HCT116 (cell line): ENCODE measurements at regions of chr19 and their contacts with region 1.

Region 1: GRCh38 chr19:42794765-42795164 is 29.3 kb upstream of the PSG8 start:
- DNase-seq: no peak
- ATAC-seq: no peak
- H3K4me3 ChIP-seq: no peak overlapping the region
- H3K27ac ChIP-seq: no peak overlapping the region
- H3K4me1 ChIP-seq: no peaks in the 10 kb centered on the region
- H3K27me3 ChIP-seq: no peaks in the 10 kb centered on the region
- CTCF ChIP-seq: no peak
- POLR2A ChIP-seq: no peak
- RAD21 ChIP-seq: no peak

Region 2: GRCh38 chr19:42634409-42635232 is 160.1 kb before region 1 on chr19:
- CTCF ChIA-PET with region 1: interaction called, 9 read pairs
- POLR2A ChIA-PET with region 1: no interaction called
- RAD21 ChIA-PET with region 1: no interaction called
- intact Hi-C with region 1: loop called (anchors 5 kb)
- DNase-seq: peak; percentile 29
- ATAC-seq: peak; percentile 91
- H3K4me3 ChIP-seq: no peak overlapping the region
- H3K27ac ChIP-seq: no peak overlapping the region
- H3K4me1 ChIP-seq: no peaks in the 10 kb centered on the region
- H3K27me3 ChIP-seq: no peaks in the 10 kb centered on the region
- CTCF ChIP-seq: peak; percentile 56 to 95 (median 93); a peak in 5 of 6 replicates
- POLR2A ChIP-seq: no peak
- RAD21 ChIP-seq: peak; percentile 65

Region 3: GRCh38 chr19:42857561-42857901 is 62.8 kb after region 1 on chr19:
- CTCF ChIA-PET with region 1: interaction called, 4 read pairs
- POLR2A ChIA-PET with region 1: no interaction called
- RAD21 ChIA-PET with region 1: no interaction called
- intact Hi-C with region 1: loop called (anchors 1 kb)
- DNase-seq: no peak
- ATAC-seq: no peak
- H3K4me3 ChIP-seq: no peak overlapping the region
- H3K27ac ChIP-seq: no peak overlapping the region
- H3K4me1 ChIP-seq: no peaks in the 10 kb centered on the region
- H3K27me3 ChIP-seq: no peaks in the 10 kb centered on the region
- CTCF ChIP-seq: peak in 2 of 3 experiments; percentile 9 to 21; a peak in 1 of 6 replicates
- POLR2A ChIP-seq: no peak
- RAD21 ChIP-seq: no peak; the same call in 1 of the 2 replicates

Region 4: DNA sequence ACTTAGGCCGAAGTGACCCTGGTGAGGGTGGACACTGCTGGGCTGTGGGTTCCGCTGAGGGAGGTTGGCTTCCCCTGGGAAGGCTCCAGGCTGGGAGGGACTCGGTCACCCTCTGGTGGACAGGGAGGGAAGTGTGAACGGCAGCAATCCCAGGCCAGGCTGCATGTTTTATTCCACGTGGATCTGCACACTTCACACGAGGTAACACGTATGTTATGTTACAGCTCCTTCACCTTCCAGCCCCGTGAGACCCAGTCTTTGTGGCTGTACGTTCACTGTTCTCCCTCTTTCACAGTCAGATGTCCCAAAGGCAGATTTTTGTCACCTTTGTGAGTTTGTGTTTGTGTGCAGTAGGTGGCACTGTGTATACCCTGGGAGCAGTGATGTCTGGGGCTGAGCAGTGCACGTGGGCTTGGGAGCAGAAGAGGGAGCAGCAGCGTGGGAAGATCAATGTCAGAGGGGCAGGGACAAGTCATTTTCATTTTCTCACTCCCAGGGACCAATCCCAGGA is 124.8 kb after region 1 on chr19:
- CTCF ChIA-PET with region 1: no interaction called
- POLR2A ChIA-PET with region 1: no interaction called
- RAD21 ChIA-PET with region 1: no interaction called
- intact Hi-C with region 1: loop called (anchors 1 kb)
- DNase-seq: no peak
- ATAC-seq: no peak
- H3K4me3 ChIP-seq: no peak overlapping the region
- H3K27ac ChIP-seq: no peak overlapping the region
- H3K4me1 ChIP-seq: peaks cover 0 to 4% of the 10 kb centered on the region in 2 experiments; a peak in 1 of 4 replicates
- H3K27me3 ChIP-seq: no peaks in the 10 kb centered on the region
- CTCF ChIP-seq: peak; percentile 49 to 85 (median 55)
- POLR2A ChIP-seq: no peak
- RAD21 ChIP-seq: no peak

Region 5: GRCh38 chr19:43101950-43102349 is 307.2 kb after region 1 on chr19:
- CTCF ChIA-PET with region 1: interaction called, 3 read pairs
- POLR2A ChIA-PET with region 1: no interaction called
- RAD21 ChIA-PET with region 1: no interaction called
- intact Hi-C with region 1: loop called (anchors 10 kb)
- DNase-seq: no peak
- ATAC-seq: peak; percentile 66
- H3K4me3 ChIP-seq: no peak overlapping the region
- H3K27ac ChIP-seq: no peak overlapping the region
- H3K4me1 ChIP-seq: no peaks in the 10 kb centered on the region
- H3K27me3 ChIP-seq: no peaks in the 10 kb centered on the region
- CTCF ChIP-seq: peak; percentile 36 to 62 (median 42); a peak in 5 of 6 replicates
- POLR2A ChIP-seq: no peak
- RAD21 ChIP-seq: peak; percentile 43